ENCODE measurements at regions of chr2 and their contacts with region 1.

Region 1: GRCh38 chr2:156319811-156320485 is 12.6 kb downstream of the NR4A2 start:
- ATAC-seq: peak in 7 of 8 experiments; percentile 33 to 83 (median 49)
- H3K4me3 ChIP-seq: peak overlapping the region in 2 of 5 donors; percentile 11 to 14
- H3K27ac ChIP-seq: no peak overlapping the region
- H3K4me1 ChIP-seq: peaks cover 11 to 22% of the 10 kb centered on the region in 2 donors

Region 2: DNA sequence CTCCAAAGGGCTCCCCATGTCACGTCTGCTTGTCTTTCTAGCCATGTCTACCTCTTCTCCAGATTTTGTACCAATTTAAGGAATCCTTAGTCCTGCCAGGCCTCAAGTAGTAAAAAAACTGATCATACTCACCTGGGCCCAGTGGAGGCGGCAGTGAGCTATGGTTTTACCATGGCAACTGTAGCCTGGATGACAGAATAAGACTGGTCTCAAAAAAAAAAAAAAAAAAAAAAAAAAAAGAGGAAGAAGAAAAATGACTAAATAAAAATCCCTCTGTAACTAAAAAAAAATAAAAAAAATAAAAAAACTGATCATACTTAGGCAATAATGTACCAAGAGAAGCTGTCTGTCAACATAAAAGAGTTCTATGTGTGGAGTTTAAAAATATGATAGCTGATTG is 209.1 kb before region 1 on chr2:
- in situ Hi-C with region 1: loop called in 1 of 9 experiments (anchors 25 kb)
- ATAC-seq: peak in 2 of 8 experiments; percentile 56 to 62
- H3K4me3 ChIP-seq: no peak overlapping the region
- H3K27ac ChIP-seq: no peak overlapping the region
- H3K4me1 ChIP-seq: no peaks in the 10 kb centered on the region

Region 3: GRCh38 chr2:156132130-156132529 is 187.8 kb before region 1 on chr2:
- in situ Hi-C with region 1: no loop called
- ATAC-seq: no peak
- H3K4me3 ChIP-seq: no peak overlapping the region
- H3K27ac ChIP-seq: no peak overlapping the region
- H3K4me1 ChIP-seq: peaks cover 0 to 29% of the 10 kb centered on the region in 2 donors

Region 4: GRCh38 chr2:156253765-156254164 is 66.2 kb before region 1 on chr2:
- in situ Hi-C with region 1: no loop called
- ATAC-seq: no peak
- H3K4me3 ChIP-seq: peak overlapping the region; percentile 31 to 59 (median 42)
- H3K27ac ChIP-seq: peak overlapping the region in 1 of 2 donors; percentile 86
- H3K4me1 ChIP-seq: peaks cover 2 to 6% of the 10 kb centered on the region in 2 donors

Region 5: DNA sequence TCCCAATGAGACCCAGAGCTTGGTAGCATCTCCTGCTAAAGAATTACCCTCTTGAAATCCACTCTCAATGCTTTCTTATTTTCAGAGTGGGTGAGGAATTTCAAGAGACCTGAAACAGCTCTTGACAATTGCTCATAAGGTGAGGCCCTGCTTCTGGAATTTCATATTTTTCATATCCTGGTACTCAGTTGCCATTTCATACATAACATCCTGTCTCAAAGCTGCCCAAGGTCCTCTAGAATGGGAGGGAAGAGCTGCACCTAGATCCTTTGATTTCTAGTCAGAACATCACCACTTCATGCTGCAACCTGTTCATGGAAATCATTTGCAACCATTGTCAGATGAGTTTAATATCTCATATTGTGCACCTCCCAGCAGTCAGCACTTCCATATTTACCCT is 532.7 kb after region 1 on chr2:
- in situ Hi-C with region 1: no loop called
- ATAC-seq: no peak
- H3K4me3 ChIP-seq: no peak overlapping the region
- H3K27ac ChIP-seq: no peak overlapping the region
- H3K4me1 ChIP-seq: no peaks in the 10 kb centered on the region

Measured in motor neuron (in vitro differentiated cells).